ENCODE measurements at regions of chr11 and their contacts with region 1.

Region 1: DNA sequence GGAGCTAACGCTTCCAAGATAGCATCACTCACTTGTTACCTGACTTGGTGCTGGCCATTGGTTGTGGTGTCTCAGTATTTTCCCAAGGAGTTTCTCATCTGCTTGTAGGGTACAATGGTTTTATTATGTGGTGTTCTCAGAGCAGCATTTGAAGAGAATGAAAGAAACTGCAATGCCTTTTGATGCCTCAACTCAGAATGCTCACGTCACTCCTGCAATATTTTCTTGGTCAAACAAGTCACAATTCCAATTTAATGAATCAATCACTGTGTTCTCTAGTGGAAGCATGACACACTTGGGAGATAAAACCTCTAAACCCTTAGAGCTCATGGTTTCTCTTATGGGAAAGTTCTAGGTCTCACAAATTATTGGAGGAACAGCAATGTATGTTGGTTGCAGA is 2.0 kb upstream of the OR5D14 start:
- DNase-seq: no peak
- ATAC-seq: no peak
- H3K4me3 Mint-ChIP-seq: no peak overlapping the region
- H3K27ac Mint-ChIP-seq: no peak overlapping the region
- H3K4me1 Mint-ChIP-seq: no peaks in the 10 kb centered on the region
- H3K27me3 Mint-ChIP-seq: no peaks in the 10 kb centered on the region

Region 2: GRCh38 chr11:55457641-55458040 is 335.7 kb before region 1 on chr11:
- CTCF ChIA-PET with region 1: no interaction called
- POLR2A ChIA-PET with region 1: no interaction called
- intact Hi-C with region 1: no loop called
- DNase-seq: no peak
- ATAC-seq: no peak
- H3K4me3 Mint-ChIP-seq: no peak overlapping the region
- H3K27ac Mint-ChIP-seq: no peak overlapping the region
- H3K4me1 Mint-ChIP-seq: no peaks in the 10 kb centered on the region
- H3K27me3 Mint-ChIP-seq: no peaks in the 10 kb centered on the region

Region 3: DNA sequence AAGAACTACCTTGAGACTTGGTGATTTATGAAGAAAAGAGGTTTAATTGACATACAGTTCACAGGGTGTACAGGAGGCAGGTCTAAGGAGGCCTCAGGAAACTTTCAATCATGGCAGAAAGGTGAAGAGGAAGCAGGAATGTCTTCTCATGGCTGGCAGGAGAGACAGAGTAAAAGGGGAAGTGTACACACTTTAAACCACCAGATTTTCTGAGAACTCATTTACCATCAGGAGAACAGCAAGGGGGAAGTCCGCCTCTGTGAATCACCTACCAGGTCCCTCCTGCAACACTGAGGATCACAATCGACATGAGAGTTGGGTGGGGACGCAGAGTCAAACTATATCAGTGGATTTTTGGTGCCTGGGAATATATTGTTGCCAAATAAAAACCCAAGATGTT is 60.4 kb before region 1 on chr11:
- CTCF ChIA-PET with region 1: no interaction called
- POLR2A ChIA-PET with region 1: no interaction called
- intact Hi-C with region 1: loop called in 1 of 2 experiments (anchors 10 kb)
- DNase-seq: no peak
- ATAC-seq: no peak
- H3K4me3 Mint-ChIP-seq: no peak overlapping the region
- H3K27ac Mint-ChIP-seq: no peak overlapping the region
- H3K4me1 Mint-ChIP-seq: no peaks in the 10 kb centered on the region
- H3K27me3 Mint-ChIP-seq: no peaks in the 10 kb centered on the region

Measured in activated CD4-positive, alpha-beta T cell treated with anti-CD3 and anti-CD28 coated beads for 36 hours (primary cell).